ENCODE measurements at regions of chr3 and their contacts with region 1.

Region 1: DNA sequence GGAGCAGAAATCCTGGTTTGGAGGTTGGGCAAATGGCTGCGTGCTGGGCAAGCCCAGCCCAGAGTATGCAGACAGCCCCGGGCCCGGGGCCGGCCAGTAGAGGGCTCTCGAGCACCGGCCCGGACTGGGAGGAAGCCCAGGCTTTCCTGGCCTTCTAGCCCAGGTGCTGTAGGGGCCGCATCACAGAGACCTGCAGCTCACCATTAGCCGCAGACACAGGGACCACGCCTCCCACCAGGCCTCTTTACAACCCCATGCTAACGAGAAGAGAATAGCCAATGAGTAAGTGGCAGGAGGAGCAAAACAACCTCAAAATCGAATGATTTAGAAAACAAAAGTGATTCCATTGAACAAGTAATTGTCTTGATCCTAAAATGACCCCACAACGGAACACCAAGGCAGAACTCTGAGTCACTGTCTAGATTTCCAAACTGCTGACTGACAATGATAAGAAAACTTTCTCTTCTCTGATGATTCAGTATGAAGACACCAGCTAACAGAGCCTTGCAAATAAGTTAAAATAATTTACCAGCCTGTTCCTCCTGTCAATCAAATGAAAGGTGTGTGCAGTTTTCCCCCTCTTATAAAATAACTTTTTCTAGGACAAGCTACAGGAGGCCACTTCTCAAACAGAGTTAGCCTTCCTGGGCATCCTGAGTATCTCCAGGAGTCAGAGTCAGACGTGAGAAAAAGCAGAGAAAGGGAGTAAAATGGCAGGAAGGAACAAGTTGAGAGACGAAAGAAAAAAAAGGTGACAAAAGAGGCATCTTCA is 102.2 kb downstream of the DGKG start:
- DNase-seq: peak; percentile 39 to 73 (median 51)
- H3K4me3 ChIP-seq: no peak overlapping the region
- H3K27ac ChIP-seq: no peak overlapping the region
- H3K4me1 ChIP-seq: no peaks in the 10 kb centered on the region
- H3K27me3 ChIP-seq: no peaks in the 10 kb centered on the region
- CTCF ChIP-seq: peak in 2 of 3 donors; percentile 22 to 54
- EP300 ChIP-seq: no peak
- POLR2A ChIP-seq: no peak

Region 2: DNA sequence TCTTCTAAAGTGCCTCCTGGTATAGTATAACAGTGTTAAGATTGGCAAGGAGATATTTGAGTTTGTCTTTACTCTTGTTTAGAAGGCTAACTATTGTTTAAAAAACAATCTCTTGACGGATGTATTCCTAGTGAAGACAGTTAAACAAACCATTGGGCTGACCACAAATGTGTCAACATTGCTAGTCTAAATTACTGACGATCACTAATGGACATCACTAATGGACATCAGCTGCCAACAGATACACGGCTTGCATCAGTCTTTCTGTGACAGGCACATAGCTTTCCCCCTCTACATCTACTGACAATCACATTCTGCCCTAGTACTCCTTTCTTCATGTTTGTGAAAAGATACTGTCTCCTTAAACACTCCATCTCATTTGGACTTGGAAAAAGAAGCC is 93.8 kb before region 1 on chr3:
- intact Hi-C with region 1: no loop called
- DNase-seq: no peak
- H3K4me3 ChIP-seq: no peak overlapping the region
- H3K27ac ChIP-seq: no peak overlapping the region
- H3K4me1 ChIP-seq: no peaks in the 10 kb centered on the region
- H3K27me3 ChIP-seq: no peaks in the 10 kb centered on the region
- CTCF ChIP-seq: no peak
- EP300 ChIP-seq: no peak
- POLR2A ChIP-seq: no peak

Region 3: DNA sequence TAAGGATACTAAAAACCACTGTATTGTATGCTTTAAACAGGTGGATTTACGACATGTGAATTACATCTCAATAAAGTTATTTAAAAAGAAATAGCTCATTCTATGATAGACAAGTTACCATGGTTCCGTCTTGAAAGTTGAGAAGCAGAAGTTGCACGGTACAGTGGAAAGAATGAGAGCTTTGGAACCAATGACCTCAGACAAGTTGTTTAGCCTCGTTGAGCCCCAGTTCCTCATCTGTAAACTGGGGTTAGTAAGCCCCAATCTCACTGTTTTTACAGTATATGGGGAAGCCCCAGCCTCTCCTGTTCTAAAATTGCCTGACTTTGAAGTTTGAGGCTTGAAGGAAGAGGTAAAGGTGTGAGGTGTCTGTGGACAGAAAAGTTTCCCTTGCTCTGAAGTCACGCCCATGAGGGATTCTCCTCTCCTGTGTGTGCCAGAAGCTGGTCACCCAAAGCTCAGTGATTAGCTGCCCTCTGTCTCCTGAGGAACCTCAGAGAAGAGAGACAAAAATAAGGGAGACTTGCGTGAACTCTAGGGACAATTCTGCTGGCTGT is 274.4 kb after region 1 on chr3:
- intact Hi-C with region 1: loop called in 3 of 4 experiments (anchors 5 kb)
- DNase-seq: no peak
- H3K4me3 ChIP-seq: no peak overlapping the region
- H3K27ac ChIP-seq: no peak overlapping the region
- H3K4me1 ChIP-seq: no peaks in the 10 kb centered on the region
- H3K27me3 ChIP-seq: no peaks in the 10 kb centered on the region
- CTCF ChIP-seq: no peak
- EP300 ChIP-seq: no peak
- POLR2A ChIP-seq: no peak

Region 4: GRCh38 chr3:186540221-186540834 is 280.5 kb after region 1 on chr3:
- intact Hi-C with region 1: loop called (anchors 5 to 10 kb)
- DNase-seq: peak; percentile 61 to 76 (median 67)
- H3K4me3 ChIP-seq: no peak overlapping the region
- H3K27ac ChIP-seq: no peak overlapping the region
- H3K4me1 ChIP-seq: no peaks in the 10 kb centered on the region
- H3K27me3 ChIP-seq: no peaks in the 10 kb centered on the region
- CTCF ChIP-seq: peak; percentile 46 to 74 (median 70)
- EP300 ChIP-seq: no peak
- POLR2A ChIP-seq: no peak

Measured in ovary (tissue), 10 donors.